ENCODE measurements at regions of chr9 and their contacts with region 1.

Region 1: DNA sequence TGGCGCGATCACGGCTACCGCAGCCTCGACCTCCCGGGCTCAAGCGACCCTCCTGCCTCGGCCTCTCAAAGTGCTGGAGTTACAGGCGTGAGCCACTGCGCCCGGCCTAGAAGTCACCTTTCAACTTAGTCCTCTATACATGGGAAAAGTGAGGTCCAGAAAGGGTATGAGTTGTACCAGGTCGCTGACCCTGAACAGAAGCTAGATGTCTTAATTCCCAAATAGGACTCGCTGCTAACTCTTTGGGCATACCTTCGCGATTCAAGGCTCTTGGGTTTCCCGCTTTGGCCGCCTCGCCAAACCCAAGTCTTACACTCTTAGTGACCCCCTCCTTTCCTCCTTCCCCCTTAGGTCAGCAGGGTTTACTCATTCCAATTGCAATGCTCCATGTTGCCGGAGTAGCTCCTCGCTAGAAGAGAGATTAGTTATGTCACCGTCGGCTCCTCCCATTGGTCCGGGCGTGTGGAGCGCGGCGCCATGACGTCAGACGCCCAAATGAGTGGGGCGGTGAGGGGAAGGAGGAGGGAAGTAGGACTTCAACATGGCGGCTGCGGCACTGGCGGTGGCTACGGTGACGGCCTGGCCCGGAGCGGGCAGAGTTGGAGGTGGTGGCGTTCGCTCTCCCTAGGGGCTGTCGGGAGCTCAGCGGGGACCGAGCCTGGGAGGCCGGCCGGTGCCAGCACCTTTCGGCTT is at the start of gene UBAP1:
- DNase-seq: peak; percentile 87 to 96 (median 90)
- ATAC-seq: peak; percentile 97
- H3K4me3 ChIP-seq: peak within 1 kb of the TSS; percentile 88
- H3K27ac ChIP-seq: peak within 1 kb of the TSS; percentile 100
- H3K4me1 ChIP-seq: peaks cover 0 to 7% of the 10 kb centered on the region in 2 experiments; a peak in 1 of 5 replicates
- H3K27me3 ChIP-seq: no peaks in the 10 kb centered on the region
- CTCF ChIP-seq: no peak
- EP300 ChIP-seq: no peak
- POLR2A ChIP-seq: peak; percentile 94
- RAD21 ChIP-seq: no peak; a peak in 1 of 4 replicates
- polyA plus RNA-seq, gene UBAP1: 1.3 to 1.5 TPM

Region 2: DNA sequence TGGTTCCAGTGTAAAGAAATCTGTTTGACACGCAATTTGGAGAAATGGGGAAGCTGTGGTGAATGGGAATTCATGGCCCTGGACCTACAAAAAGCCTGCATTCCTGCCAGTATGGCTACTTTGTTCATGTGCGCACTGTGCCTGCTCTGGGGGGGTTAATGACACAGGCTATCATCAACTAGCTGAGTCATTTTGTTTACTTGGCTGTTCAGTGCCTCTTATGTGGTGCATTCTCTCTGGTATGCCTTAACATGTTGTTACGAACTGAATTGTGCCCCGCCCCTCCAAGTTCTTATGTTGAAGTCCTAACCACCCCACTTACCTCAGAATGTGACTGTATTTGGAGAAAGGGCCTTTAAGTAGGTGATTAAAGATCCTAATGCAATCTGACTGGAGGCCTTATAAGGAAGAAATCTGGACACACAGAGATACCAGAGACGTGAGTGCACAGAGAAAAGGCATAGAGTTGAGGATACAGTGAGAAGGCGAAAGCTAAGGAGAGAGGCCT is 20.2 kb before region 1 on chr9:
- CTCF ChIA-PET with region 1: no interaction called
- POLR2A ChIA-PET with region 1: interaction called, 22 read pairs
- in situ Hi-C with region 1: no loop called
- intact Hi-C with region 1: no loop called
- DNase-seq: peak; percentile 64 to 73 (median 68)
- ATAC-seq: peak; percentile 95
- H3K4me3 ChIP-seq: no peak overlapping the region
- H3K27ac ChIP-seq: peak overlapping the region; percentile 73
- H3K4me1 ChIP-seq: peaks cover 0 to 21% of the 10 kb centered on the region in 2 experiments; a peak in 4 of 5 replicates
- H3K27me3 ChIP-seq: no peaks in the 10 kb centered on the region
- CTCF ChIP-seq: no peak
- EP300 ChIP-seq: peak; percentile 48
- POLR2A ChIP-seq: 0 out of 2 replicates have a peak, but pooled peaks have one; percentile 25
- RAD21 ChIP-seq: no peak

Region 3: DNA sequence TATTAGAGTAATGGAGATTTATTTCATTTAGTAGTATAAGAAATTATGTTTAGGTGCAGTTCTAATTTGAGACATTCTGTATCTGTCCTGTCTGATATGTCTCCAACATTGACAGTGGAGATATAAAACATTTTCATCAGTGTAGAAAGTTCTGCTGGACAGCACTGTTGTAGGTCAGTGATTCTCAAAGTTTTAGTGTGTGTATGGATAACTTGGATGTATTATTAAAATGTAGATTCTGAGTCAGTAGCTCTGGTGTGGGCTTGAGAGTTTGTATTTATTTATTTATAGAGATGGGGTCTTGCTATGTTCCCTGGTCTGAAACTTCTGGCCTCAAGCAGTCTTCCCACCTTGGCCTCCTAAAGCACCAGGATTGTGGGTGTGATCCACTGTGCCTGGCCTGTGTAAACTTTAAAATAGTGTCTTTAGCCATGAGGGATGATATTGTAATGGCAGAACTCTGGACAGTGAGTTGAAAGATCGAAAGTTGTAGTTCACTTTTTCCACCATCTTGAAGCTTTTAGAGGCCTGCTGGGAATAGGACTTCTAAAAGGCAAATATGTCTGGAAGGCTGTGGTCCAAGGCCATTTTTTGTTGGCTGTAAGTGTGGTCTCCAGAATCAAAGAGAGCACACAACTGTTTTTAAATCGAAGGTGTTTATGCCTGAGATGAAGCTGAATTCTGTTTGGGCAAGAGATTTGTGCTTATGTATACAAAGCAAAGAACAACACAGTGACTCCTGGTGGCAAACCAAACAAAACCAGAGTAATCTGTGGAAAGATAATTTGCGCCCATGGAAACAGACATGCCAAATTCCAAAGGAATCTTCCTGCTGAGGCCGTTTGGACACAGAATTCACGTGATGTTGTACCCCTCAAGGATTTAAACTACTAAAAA is 12.6 kb after region 1 on chr9:
- CTCF ChIA-PET with region 1: interaction called, 5 read pairs
- POLR2A ChIA-PET with region 1: interaction called, 10 read pairs
- in situ Hi-C with region 1: no loop called
- intact Hi-C with region 1: no loop called
- DNase-seq: no peak
- ATAC-seq: peak; percentile 49; the same call in 1 of the 3 replicates
- H3K4me3 ChIP-seq: no peak overlapping the region
- H3K27ac ChIP-seq: no peak overlapping the region
- H3K4me1 ChIP-seq: peaks cover 0 to 4% of the 10 kb centered on the region in 2 experiments; a peak in 3 of 5 replicates
- H3K27me3 ChIP-seq: no peaks in the 10 kb centered on the region
- CTCF ChIP-seq: peak; percentile 11 to 44 (median 32); a peak in 3 of 6 replicates
- EP300 ChIP-seq: no peak
- POLR2A ChIP-seq: no peak
- RAD21 ChIP-seq: peak in 1 of 2 experiments; percentile 42; a peak in 3 of 4 replicates

Measured in K562 (cell line).